ENCODE measurements at regions of chr4 and their contacts with region 1.

Region 1: GRCh38 chr4:9812501-9813340 is 31.3 kb downstream of the DRD5 start:
- DNase-seq: peak; percentile 8
- H3K4me3 Mint-ChIP-seq: no peak overlapping the region
- H3K27ac Mint-ChIP-seq: no peak overlapping the region
- H3K4me1 Mint-ChIP-seq: peaks cover 13% of the 10 kb centered on the region
- H3K27me3 Mint-ChIP-seq: peaks cover 28% of the 10 kb centered on the region

Region 2: DNA sequence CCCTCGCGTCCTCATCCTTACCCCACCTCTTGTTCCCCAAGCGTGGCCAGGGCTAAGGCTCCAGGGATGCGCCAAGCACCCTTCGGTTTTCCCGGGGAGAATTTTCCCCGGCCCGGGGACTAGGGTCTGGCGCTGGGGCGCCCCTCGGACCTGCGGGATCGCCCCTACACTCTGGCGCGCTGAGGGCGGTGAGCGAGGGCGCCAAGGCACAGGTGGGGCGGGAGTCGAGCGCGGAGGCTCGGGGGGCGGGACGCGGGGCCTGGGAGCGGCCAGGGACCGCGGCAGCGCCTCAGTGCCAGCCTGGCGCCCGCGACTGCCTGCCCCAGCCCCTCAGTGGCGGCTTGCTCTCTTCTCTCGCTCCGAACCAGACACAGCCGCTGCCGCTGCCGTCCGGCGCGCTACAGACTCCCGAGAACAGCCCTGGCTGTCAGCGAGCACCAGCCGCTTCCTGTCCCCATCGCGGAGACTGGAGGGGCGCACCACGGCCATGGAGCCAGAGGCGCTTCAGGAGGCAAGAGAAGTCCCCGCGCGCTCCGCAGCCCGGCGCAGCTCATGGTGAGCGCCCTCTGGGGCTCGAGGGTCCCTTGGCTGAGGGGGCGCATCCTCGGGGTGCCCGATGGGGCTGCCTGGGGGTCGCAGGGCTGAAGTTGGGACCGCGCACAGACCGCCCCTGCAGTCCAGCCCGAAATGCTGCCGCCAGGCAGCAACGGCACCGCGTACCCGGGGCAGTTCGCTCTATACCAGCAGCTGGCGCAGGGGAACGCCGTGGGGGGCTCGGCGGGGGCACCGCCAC is 31.2 kb before region 1 on chr4 and contains the start of gene DRD5:
- intact Hi-C with region 1: no loop called
- DNase-seq: no peak
- H3K4me3 Mint-ChIP-seq: no peak within 1 kb of the TSS
- H3K27ac Mint-ChIP-seq: no peak within 1 kb of the TSS
- H3K4me1 Mint-ChIP-seq: no peaks in the 10 kb centered on the region
- H3K27me3 Mint-ChIP-seq: peaks cover 32% of the 10 kb centered on the region
- total RNA-seq, gene DRD5: not detected in 2 replicates

Region 3: DNA sequence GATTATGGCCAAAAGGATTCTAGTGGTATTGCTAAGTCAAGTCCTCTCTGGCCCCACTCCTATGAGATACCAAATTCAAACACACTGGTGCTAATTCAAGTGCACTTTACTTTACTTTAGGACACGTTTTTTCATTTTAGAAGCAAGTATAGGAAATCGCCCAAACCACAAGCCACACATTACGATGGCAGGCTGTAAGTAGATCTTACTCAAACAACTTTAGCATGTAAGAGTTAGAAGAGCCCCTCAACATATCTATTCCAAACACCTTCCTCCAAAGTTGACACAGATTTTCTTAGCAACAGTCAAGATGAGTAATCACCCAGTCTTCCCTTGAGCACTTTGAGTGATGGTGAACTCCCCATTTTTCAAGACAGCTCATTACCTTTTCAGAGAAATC is 12.3 kb after region 1 on chr4:
- intact Hi-C with region 1: loop called (anchors 1 kb)
- DNase-seq: peak; percentile 21
- H3K4me3 Mint-ChIP-seq: no peak overlapping the region
- H3K27ac Mint-ChIP-seq: no peak overlapping the region
- H3K4me1 Mint-ChIP-seq: peaks cover 14% of the 10 kb centered on the region
- H3K27me3 Mint-ChIP-seq: peaks cover 19% of the 10 kb centered on the region

Region 4: DNA sequence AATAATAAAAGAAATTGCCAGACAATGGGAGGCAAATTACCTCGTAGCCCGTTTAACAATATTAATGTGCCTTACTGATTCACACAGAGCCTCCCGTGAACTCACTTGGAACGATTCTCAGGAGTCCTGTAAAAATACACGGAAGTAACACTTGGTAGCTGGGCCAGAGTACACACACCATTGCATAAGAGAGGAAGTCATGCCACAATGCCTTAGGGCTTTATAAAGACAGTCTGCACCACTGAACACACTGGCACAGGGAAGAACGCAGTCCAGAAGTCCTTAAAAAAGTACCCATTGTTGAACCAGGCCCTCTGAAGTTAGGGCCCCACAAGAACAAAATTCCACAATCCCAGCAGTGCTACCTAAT is 193.5 kb after region 1 on chr4:
- intact Hi-C with region 1: loop called (anchors 2 kb)
- DNase-seq: no peak
- H3K4me3 Mint-ChIP-seq: no peak overlapping the region
- H3K27ac Mint-ChIP-seq: no peak overlapping the region
- H3K4me1 Mint-ChIP-seq: peaks cover 35% of the 10 kb centered on the region
- H3K27me3 Mint-ChIP-seq: no peaks in the 10 kb centered on the region

Region 5: GRCh38 chr4:10096201-10096977 is 283.7 kb after region 1 on chr4:
- intact Hi-C with region 1: loop called (anchors 5 kb)
- DNase-seq: peak; percentile 72
- H3K4me3 Mint-ChIP-seq: peak overlapping the region; percentile 62
- H3K27ac Mint-ChIP-seq: peak overlapping the region; percentile 99
- H3K4me1 Mint-ChIP-seq: peaks cover 94% of the 10 kb centered on the region
- H3K27me3 Mint-ChIP-seq: no peaks in the 10 kb centered on the region

Measured in activated T-helper 1 cell treated with anti-CD3 and anti-CD28 coated beads, Interleukin-12 subunit alpha, Interleukin-12 subunit beta, Interleukin-2, Interleukin-4 antibody, amounts not matched to agents 30 ng/mL and 10 ng/mL and 1 ng/mL, durations not matched to agents 14 hours and 24 hours and 36 hours (primary cell).